Activated CD4-positive, alpha-beta T cell treated with anti-CD3 and anti-CD28 coated beads for 36 hours (primary cell): ENCODE measurements at regions of chr1 and their contacts with region 1.

Region 1: DNA sequence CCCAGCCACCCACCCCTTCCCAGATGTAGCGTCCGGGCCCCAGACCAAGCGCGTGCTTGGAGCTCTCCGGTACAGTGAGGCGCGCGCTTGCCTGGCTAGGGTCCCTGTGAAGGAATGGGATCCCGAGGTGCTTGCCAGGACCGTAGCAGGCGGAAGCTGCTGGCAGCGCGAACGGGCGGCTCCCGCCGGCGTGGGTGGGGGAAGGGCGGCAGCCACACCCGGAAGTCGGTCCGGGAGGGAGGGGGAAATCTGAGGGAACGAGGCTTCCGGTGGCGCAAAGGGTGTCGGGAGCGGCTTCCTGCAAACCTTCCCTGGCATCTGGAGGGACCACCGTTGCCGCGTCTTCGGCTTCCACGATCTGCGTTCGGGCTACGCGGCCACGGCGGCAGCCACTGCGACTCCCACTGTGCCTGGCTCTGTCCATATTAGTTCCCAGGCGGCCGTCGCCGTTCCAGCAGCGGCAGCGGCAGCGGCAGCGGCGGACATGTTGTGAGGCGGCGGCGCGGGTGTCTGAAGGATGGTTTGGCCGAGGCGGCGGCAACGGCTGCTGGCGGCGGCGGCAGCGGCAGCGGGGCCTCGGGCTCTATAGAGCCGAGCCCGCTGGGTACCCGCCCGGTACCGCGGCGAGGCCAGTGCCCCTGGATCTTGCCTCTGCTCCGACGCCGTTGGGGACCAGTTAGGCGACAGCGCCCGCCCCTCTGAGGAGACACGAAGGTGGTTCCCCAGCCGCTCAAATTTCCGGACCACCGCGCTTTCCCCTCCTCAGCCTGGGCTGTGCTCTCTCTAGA is at the start of gene DR1:
- DNase-seq: peak; percentile 96
- ATAC-seq: peak; percentile 78
- H3K4me3 Mint-ChIP-seq: peak within 1 kb of the TSS; percentile 97
- H3K27ac Mint-ChIP-seq: peak within 1 kb of the TSS; percentile 97
- H3K4me1 Mint-ChIP-seq: peaks cover 22% of the 10 kb centered on the region
- H3K27me3 Mint-ChIP-seq: no peaks in the 10 kb centered on the region
- total RNA-seq, gene DR1: 84.8 to 95.3 TPM

Region 2: GRCh38 chr1:92485381-92486257 is 860.2 kb before region 1 on chr1:
- CTCF ChIA-PET with region 1: no interaction called
- POLR2A ChIA-PET with region 1: no interaction called
- intact Hi-C with region 1: loop called in 1 of 2 experiments (anchors 5 kb)
- DNase-seq: peak; percentile 95
- ATAC-seq: peak; percentile 58
- H3K4me3 Mint-ChIP-seq: peak overlapping the region; percentile 98
- H3K27ac Mint-ChIP-seq: peak overlapping the region; percentile 97
- H3K4me1 Mint-ChIP-seq: peaks cover 30% of the 10 kb centered on the region
- H3K27me3 Mint-ChIP-seq: no peaks in the 10 kb centered on the region

Region 3: DNA sequence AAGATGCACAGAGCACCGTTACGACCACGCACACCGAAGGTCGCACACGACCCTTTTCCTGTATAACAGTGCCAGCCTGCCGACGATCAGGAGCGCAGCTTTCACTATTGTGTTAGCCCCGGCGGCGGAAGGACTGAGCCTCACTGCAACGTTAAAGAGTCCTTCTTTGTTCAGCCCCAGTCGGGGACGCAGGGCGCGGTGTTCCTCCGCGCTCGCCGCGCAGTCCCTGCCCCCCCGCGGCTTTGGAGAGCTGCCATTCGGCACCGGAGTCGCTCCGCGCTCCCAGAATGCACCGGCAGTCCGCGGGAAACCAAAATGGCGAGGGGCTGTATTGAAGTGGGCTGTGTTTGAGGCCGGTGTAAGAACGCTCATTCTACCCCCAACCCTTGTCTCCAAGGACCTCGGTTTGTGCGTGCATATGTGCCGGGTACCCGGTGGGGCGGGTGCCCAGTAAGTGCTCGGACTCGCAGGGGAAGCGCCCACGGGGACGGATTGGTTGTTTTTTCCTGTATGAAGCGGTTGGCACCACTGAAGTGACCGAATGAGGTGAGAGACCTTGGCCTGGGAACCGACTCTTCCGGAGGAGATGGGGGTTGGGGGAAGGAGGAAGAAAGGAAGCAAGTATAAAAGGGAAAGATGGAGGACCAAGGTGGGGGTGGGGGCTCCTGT is 266.7 kb before region 1 on chr1 and contains the start of gene MTF2:
- CTCF ChIA-PET with region 1: interaction called, 6 read pairs
- POLR2A ChIA-PET with region 1: interaction called, 8 read pairs
- intact Hi-C with region 1: loop called (anchors 1 to 2 kb)
- DNase-seq: peak; percentile 97
- ATAC-seq: peak; percentile 91
- H3K4me3 Mint-ChIP-seq: peak within 1 kb of the TSS; percentile 94
- H3K27ac Mint-ChIP-seq: peak within 1 kb of the TSS; percentile 94
- H3K4me1 Mint-ChIP-seq: peaks cover 29% of the 10 kb centered on the region
- H3K27me3 Mint-ChIP-seq: no peaks in the 10 kb centered on the region
- total RNA-seq, gene MTF2: 49.8 to 55.0 TPM

Region 4: GRCh38 chr1:93304716-93305138 is 41.1 kb before region 1 on chr1:
- CTCF ChIA-PET with region 1: interaction called, 23 read pairs
- POLR2A ChIA-PET with region 1: interaction called, 8 read pairs
- intact Hi-C with region 1: loop called (anchors 2 kb)
- DNase-seq: peak; percentile 43
- ATAC-seq: peak; percentile 44
- H3K4me3 Mint-ChIP-seq: no peak overlapping the region
- H3K27ac Mint-ChIP-seq: no peak overlapping the region
- H3K4me1 Mint-ChIP-seq: no peaks in the 10 kb centered on the region
- H3K27me3 Mint-ChIP-seq: no peaks in the 10 kb centered on the region

Region 5: DNA sequence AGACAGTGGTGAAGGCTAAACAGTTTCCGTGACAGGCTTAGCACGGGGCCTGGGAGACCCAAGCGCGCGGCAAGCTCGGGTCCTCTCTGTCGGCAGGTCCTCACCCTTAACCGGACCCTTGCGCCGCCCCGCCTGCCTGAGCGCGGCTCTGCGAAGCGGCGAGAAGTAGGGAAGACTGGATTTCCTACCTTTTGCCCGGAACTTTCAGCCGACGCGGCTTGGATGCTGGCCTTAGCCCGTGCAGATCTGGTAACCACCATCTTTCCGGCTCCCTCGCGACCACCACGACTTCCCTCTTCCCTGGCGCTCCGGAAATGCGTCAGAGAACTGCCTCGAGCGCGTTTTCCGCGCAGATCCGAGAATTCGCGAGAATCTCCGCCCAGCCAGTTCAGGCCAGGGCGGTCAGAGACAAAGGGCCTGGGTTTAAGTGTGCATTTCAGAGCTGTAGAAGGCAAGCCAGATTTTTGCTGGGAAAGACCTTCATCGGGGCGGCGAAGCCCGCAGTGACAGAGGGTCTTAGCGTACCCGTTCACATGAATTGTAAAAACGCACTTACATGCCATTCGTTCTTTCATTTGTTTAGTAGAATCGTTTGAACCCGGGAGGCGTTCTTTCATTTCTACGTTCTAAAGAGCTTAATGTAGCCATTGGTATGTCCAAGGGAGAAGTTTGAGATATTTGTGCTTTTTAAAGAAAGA is 533.2 kb after region 1 on chr1 and contains the start of gene DNTTIP2:
- CTCF ChIA-PET with region 1: no interaction called
- POLR2A ChIA-PET with region 1: no interaction called
- intact Hi-C with region 1: loop called (anchors 1 to 2 kb)
- DNase-seq: peak; percentile 94
- ATAC-seq: peak; percentile 93
- H3K4me3 Mint-ChIP-seq: peak within 1 kb of the TSS; percentile 92
- H3K27ac Mint-ChIP-seq: peak within 1 kb of the TSS; percentile 97
- H3K4me1 Mint-ChIP-seq: peaks cover 45% of the 10 kb centered on the region
- H3K27me3 Mint-ChIP-seq: no peaks in the 10 kb centered on the region
- total RNA-seq, gene DNTTIP2: 82.8 to 84.9 TPM

Region 6: GRCh38 chr1:95072532-95073419 is 1726.9 kb after region 1 on chr1 and contains the start of gene ALG14:
- CTCF ChIA-PET with region 1: no interaction called
- POLR2A ChIA-PET with region 1: no interaction called
- intact Hi-C with region 1: loop called in 1 of 2 experiments (anchors 5 kb)
- DNase-seq: peak; percentile 95
- ATAC-seq: peak; percentile 97
- H3K4me3 Mint-ChIP-seq: peak within 1 kb of the TSS; percentile 91
- H3K27ac Mint-ChIP-seq: peak within 1 kb of the TSS; percentile 98
- H3K4me1 Mint-ChIP-seq: peaks cover 17% of the 10 kb centered on the region
- H3K27me3 Mint-ChIP-seq: peaks cover 2% of the 10 kb centered on the region
- total RNA-seq, gene ALG14: 5.3 to 7.3 TPM